HCT116 (cell line): ENCODE measurements at regions of chr18 and their contacts with region 1.

Region 1: GRCh38 chr18:59402432-59403090 is 43.5 kb upstream of the LMAN1 start:
- DNase-seq: peak; percentile 94
- ATAC-seq: peak; percentile 100
- H3K4me3 ChIP-seq: no peak overlapping the region
- H3K27ac ChIP-seq: no peak overlapping the region
- H3K4me1 ChIP-seq: no peaks in the 10 kb centered on the region
- H3K27me3 ChIP-seq: no peaks in the 10 kb centered on the region
- CTCF ChIP-seq: peak; percentile 90 to 99 (median 99)
- POLR2A ChIP-seq: no peak
- RAD21 ChIP-seq: peak; percentile 100

Region 2: GRCh38 chr18:58781627-58782194 is 620.9 kb before region 1 on chr18:
- CTCF ChIA-PET with region 1: no interaction called
- POLR2A ChIA-PET with region 1: no interaction called
- RAD21 ChIA-PET with region 1: interaction called in 1 of 2 experiments, 3 read pairs
- intact Hi-C with region 1: loop called (anchors 5 kb)
- DNase-seq: peak; percentile 69
- ATAC-seq: peak; percentile 63
- H3K4me3 ChIP-seq: no peak overlapping the region
- H3K27ac ChIP-seq: no peak overlapping the region
- H3K4me1 ChIP-seq: peaks cover 12 to 26% of the 10 kb centered on the region in 2 experiments
- H3K27me3 ChIP-seq: peaks cover 23% of the 10 kb centered on the region
- CTCF ChIP-seq: peak; percentile 81 to 93 (median 91)
- POLR2A ChIP-seq: no peak
- RAD21 ChIP-seq: peak; percentile 97

Region 3: DNA sequence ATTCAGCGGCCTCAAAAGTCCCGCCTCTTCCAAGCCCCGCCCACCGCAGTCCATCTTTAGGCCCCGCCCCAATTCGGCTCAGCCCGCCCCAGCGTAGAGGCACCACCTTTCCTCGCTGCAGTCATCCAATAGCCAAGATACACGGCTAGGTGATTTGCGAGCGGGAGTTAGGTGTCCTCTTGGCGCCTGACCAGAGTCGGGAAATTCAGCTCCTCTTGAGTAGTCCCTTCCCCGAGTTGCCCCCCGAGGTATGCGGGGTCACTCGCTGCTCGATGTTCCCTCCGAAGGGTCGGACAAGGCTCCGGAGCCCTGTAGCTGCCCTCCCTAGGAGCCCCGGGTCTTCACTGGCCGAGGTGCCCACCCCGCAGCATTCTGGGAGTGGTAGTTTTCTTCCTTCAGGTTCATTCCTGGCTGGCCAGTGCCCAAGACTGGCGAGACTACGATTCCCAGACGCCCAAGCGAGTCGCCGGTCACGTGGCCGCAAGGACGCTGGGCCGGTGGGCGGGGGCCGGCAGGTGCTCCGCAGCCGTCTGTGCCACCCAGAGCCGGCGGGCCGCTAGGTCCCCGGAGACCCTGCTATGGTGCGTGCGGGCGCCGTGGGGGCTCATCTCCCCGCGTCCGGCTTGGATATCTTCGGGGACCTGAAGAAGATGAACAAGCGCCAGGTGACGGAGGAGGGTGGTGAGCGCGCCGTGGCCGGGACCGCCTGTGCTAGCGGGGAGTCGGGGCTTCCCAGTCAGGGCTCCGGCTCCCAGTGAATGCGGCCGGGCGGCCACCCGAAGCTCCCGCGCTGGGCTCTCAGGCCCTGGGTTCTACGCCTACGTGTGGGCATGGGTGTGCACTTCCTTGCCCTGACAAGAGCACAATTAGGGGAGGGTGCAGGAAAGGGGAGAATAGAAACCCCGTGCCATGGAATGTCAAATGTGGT is 262.9 kb before region 1 on chr18 and contains the start of gene SEC11C:
- CTCF ChIA-PET with region 1: no interaction called
- POLR2A ChIA-PET with region 1: no interaction called
- RAD21 ChIA-PET with region 1: no interaction called
- intact Hi-C with region 1: loop called (anchors 5 kb)
- DNase-seq: peak; percentile 95
- ATAC-seq: peak; percentile 95
- H3K4me3 ChIP-seq: peak within 1 kb of the TSS; percentile 92 to 93
- H3K27ac ChIP-seq: peak within 1 kb of the TSS; percentile 64
- H3K4me1 ChIP-seq: peaks cover 6 to 11% of the 10 kb centered on the region in 2 experiments; a peak in 3 of 4 replicates
- H3K27me3 ChIP-seq: peaks cover 18% of the 10 kb centered on the region
- CTCF ChIP-seq: no peak
- POLR2A ChIP-seq: peak; percentile 54
- RAD21 ChIP-seq: no peak
- total RNA-seq, gene SEC11C: 42.2 TPM

Region 4: GRCh38 chr18:59222341-59222740 is 180.2 kb before region 1 on chr18:
- CTCF ChIA-PET with region 1: no interaction called
- POLR2A ChIA-PET with region 1: no interaction called
- RAD21 ChIA-PET with region 1: no interaction called
- intact Hi-C with region 1: no loop called
- DNase-seq: no peak
- ATAC-seq: no peak
- H3K4me3 ChIP-seq: no peak overlapping the region
- H3K27ac ChIP-seq: no peak overlapping the region
- H3K4me1 ChIP-seq: no peaks in the 10 kb centered on the region
- H3K27me3 ChIP-seq: peaks cover 66% of the 10 kb centered on the region
- CTCF ChIP-seq: no peak
- POLR2A ChIP-seq: no peak
- RAD21 ChIP-seq: no peak

Region 5: GRCh38 chr18:59308248-59308937 is 94.2 kb before region 1 on chr18:
- CTCF ChIA-PET with region 1: interaction called, 110 read pairs
- POLR2A ChIA-PET with region 1: interaction called, 3 read pairs
- RAD21 ChIA-PET with region 1: interaction called, 24 to 27 read pairs
- intact Hi-C with region 1: loop called (anchors 2 kb)
- DNase-seq: peak; percentile 43
- ATAC-seq: peak; percentile 96
- H3K4me3 ChIP-seq: peak overlapping the region; percentile 40 to 54
- H3K27ac ChIP-seq: no peak overlapping the region
- H3K4me1 ChIP-seq: peaks cover 0 to 22% of the 10 kb centered on the region in 2 experiments; a peak in 3 of 4 replicates
- H3K27me3 ChIP-seq: no peaks in the 10 kb centered on the region
- CTCF ChIP-seq: peak; percentile 80 to 97 (median 88)
- POLR2A ChIP-seq: no peak
- RAD21 ChIP-seq: peak; percentile 86

Region 6: GRCh38 chr18:59387687-59388565 is 14.6 kb before region 1 on chr18:
- CTCF ChIA-PET with region 1: interaction called, 12 read pairs
- POLR2A ChIA-PET with region 1: no interaction called
- RAD21 ChIA-PET with region 1: no interaction called
- intact Hi-C with region 1: no loop called
- DNase-seq: no peak
- ATAC-seq: no peak
- H3K4me3 ChIP-seq: no peak overlapping the region
- H3K27ac ChIP-seq: no peak overlapping the region
- H3K4me1 ChIP-seq: no peaks in the 10 kb centered on the region
- H3K27me3 ChIP-seq: no peaks in the 10 kb centered on the region
- CTCF ChIP-seq: no peak
- POLR2A ChIP-seq: no peak
- RAD21 ChIP-seq: no peak

Region 7: DNA sequence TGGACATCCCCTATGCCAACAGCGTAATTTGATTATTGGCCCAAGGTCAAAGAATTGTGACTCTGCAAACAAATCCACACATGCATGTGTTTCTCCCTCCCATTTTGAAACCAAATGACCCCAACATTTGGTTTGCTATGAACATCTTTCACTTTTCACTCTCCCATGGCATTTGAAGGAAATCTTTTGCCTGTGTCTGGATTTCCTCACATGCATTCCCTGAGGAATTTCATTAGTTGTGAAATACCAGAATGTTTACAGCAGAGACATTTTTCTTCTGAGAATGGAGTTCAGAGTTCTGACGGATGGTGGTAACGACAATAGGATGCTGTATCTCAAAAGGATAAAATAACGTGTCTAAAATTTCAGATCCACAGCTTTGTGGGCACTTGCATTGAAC is 16.8 kb after region 1 on chr18:
- CTCF ChIA-PET with region 1: no interaction called
- POLR2A ChIA-PET with region 1: no interaction called
- RAD21 ChIA-PET with region 1: no interaction called
- intact Hi-C with region 1: no loop called
- DNase-seq: no peak
- ATAC-seq: no peak
- H3K4me3 ChIP-seq: no peak overlapping the region
- H3K27ac ChIP-seq: no peak overlapping the region
- H3K4me1 ChIP-seq: no peaks in the 10 kb centered on the region
- H3K27me3 ChIP-seq: peaks cover 13% of the 10 kb centered on the region
- CTCF ChIP-seq: no peak
- POLR2A ChIP-seq: no peak
- RAD21 ChIP-seq: no peak

Region 8: GRCh38 chr18:59744271-59744721 is 341.7 kb after region 1 on chr18:
- CTCF ChIA-PET with region 1: no interaction called
- POLR2A ChIA-PET with region 1: no interaction called
- RAD21 ChIA-PET with region 1: no interaction called
- intact Hi-C with region 1: no loop called
- DNase-seq: no peak
- ATAC-seq: no peak
- H3K4me3 ChIP-seq: no peak overlapping the region
- H3K27ac ChIP-seq: no peak overlapping the region
- H3K4me1 ChIP-seq: peaks cover 0 to 14% of the 10 kb centered on the region in 2 experiments; a peak in 2 of 4 replicates
- H3K27me3 ChIP-seq: no peaks in the 10 kb centered on the region
- CTCF ChIP-seq: no peak
- POLR2A ChIP-seq: no peak
- RAD21 ChIP-seq: no peak